ENCODE measurements at regions of chr6 and their contacts with region 1.

Region 1: DNA sequence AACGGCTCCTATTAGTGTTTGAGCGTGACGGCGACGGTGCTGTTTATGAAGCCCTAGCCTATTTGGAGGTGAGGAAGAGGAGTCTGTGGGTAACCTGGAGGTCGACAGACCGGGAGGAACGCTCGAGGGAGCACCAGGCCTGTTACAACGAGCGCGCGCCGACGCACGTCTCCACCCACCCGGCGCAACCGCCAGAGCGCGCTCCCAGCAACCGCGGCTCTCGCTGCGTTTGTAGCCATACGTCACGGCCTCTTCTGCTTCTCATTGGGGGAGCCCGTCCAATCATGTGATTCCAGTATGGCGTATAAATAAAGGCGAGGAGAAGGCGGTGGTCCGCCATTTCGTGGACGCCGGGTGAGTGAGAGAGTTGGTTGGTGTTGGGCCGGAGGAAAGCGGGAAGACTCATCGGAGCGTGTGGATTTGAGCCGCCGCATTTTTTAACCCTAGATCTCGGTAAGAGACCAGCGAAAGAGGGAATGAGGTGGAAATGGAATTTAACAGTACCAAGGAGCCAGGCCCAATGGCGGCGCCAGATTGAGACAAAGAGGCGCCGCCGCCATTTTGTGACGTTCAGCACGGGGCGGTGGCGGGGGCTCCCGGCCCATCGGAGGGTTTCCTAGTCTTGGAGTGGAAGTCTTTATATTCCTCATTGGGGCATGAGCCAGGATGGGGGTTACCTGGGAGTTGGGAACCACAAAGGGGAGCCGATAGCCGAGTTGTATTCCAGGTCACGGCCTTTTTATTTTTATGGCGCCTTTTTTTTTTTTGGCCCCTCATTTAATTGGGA is at the start of gene SRSF3:
- DNase-seq: peak; percentile 90 to 98 (median 97)
- H3K4me3 ChIP-seq: peak within 1 kb of the TSS; percentile 53 to 99 (median 91)
- H3K27ac ChIP-seq: peak within 1 kb of the TSS; percentile 88 to 100 (median 99)
- H3K27me3 ChIP-seq: no peaks in the 10 kb centered on the region
- CTCF ChIP-seq: peak in 55 of 56 donors; percentile 22 to 78 (median 62)
- total RNA-seq, gene SRSF3: 108 to 194 (median 145) TPM

Region 2: GRCh38 chr6:36442671-36443470 is 151.4 kb before region 1 on chr6 and contains the starts of genes KCTD20 and PXT1:
- intact Hi-C with region 1: loop called (anchors 2 to 5 kb)
- DNase-seq: peak; percentile 77 to 92 (median 87)
- H3K4me3 ChIP-seq: peak within 1 kb of the TSS; percentile 74 to 99 (median 92)
- H3K27ac ChIP-seq: peak within 1 kb of the TSS; percentile 68 to 99 (median 96)
- H3K27me3 ChIP-seq: no peaks in the 10 kb centered on the region
- CTCF ChIP-seq: peak in 24 of 56 donors; percentile 7 to 57 (median 24)
- total RNA-seq, gene KCTD20: 25.8 to 51.1 (median 35.6) TPM
- total RNA-seq, gene PXT1: 0.17 to 1.1 (median 0.34) TPM in 51 of 120 experiments, not detected in the others

Region 3: DNA sequence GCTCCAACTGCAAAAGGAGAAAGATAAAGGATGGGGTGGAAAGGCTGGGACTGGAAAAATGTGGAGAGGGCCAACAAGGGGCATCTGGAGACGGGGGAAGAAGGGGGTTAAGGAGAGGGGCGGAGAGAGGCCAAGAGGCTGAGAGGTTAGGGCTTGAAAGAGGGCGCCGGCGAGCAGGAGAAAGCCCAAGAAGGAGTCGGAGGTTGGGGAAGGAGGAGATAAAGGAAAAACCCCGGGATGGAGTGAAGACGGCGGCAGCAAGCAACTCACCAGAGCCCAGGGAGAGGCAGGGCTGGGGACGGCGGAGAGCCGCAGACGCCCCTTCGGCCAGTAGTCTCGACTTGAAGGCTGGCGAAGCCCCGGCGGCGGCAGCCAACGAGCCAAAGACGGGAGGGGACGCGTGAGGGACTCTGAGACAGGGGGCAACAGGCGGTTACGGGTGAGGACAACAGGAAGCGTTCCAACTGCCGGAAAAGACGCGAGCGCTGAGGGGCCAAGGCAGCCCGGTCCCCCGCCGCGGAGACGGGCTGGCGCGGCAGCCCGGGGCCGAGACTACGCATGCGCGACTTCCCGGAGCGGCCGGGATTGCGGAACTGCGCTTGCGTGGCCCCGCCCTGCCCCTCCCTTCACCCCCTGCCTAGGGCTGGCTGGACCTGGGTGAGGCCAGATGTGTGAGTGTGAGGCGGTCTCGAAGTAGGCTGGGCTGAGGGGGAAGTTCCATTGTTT is 47.1 kb before region 1 on chr6 and contains the start of gene STK38:
- intact Hi-C with region 1: loop called (anchors 1 to 2 kb)
- DNase-seq: peak; percentile 72 to 91 (median 84)
- H3K4me3 ChIP-seq: peak within 1 kb of the TSS; percentile 58 to 100 (median 96)
- H3K27ac ChIP-seq: peak within 1 kb of the TSS; percentile 88 to 100 (median 97)
- H3K27me3 ChIP-seq: no peaks in the 10 kb centered on the region
- CTCF ChIP-seq: peak in 39 of 56 donors; percentile 3 to 63 (median 37)
- total RNA-seq, gene STK38: 6.3 to 23.4 (median 13.6) TPM

Measured in dorsolateral prefrontal cortex (tissue), 120 donors.